Activated naive CD4-positive, alpha-beta T cell treated with anti-CD3 and anti-CD28 coated beads, Interleukin-2, amount 10 ng/mL, durations not matched to agents 7 days and 5 days (primary cell): ENCODE measurements at regions of chr6 and their contacts with region 1.

Region 1: GRCh38 chr6:5214570-5215052 is 46.1 kb downstream of the LYRM4 start:
- DNase-seq: no peak
- H3K4me3 Mint-ChIP-seq: no peak overlapping the region
- H3K27ac Mint-ChIP-seq: no peak overlapping the region
- H3K4me1 Mint-ChIP-seq: peaks cover 11% of the 10 kb centered on the region
- H3K27me3 Mint-ChIP-seq: no peaks in the 10 kb centered on the region

Region 2: DNA sequence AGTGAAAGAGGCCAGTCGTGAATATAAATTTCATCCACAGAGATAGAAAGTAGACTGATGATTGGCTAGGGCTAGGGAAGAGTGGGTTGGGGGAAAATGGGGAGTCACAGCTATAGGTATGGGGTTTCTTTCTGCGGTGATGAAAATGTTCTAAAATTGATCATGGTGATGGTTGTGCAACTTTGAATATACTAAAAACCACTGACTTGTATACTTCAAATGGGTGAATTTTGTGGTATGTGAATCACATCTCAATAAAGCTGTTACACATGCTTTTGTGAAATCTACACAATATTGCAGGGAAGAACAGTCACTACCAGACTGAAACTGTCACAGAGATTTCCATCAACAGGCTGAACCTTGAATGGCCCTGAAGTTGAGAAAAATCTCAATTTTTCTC is 15.3 kb before region 1 on chr6:
- CTCF ChIA-PET with region 1: no interaction called
- DNase-seq: no peak
- H3K4me3 Mint-ChIP-seq: no peak overlapping the region
- H3K27ac Mint-ChIP-seq: no peak overlapping the region
- H3K4me1 Mint-ChIP-seq: no peaks in the 10 kb centered on the region
- H3K27me3 Mint-ChIP-seq: no peaks in the 10 kb centered on the region

Region 3: GRCh38 chr6:5379647-5380242 is 165.1 kb after region 1 on chr6:
- CTCF ChIA-PET with region 1: interaction called, 20 read pairs
- DNase-seq: peak; percentile 54
- H3K4me3 Mint-ChIP-seq: no peak overlapping the region
- H3K27ac Mint-ChIP-seq: no peak overlapping the region
- H3K4me1 Mint-ChIP-seq: no peaks in the 10 kb centered on the region
- H3K27me3 Mint-ChIP-seq: no peaks in the 10 kb centered on the region